Activated CD4-positive, alpha-beta T cell treated with anti-CD3 and anti-CD28 coated beads, Interleukin-2, amount 10 ng/mL, durations not matched to agents 24 days and 14 days (primary cell): ENCODE measurements at regions of chr20 and their contacts with region 1.

Region 1: DNA sequence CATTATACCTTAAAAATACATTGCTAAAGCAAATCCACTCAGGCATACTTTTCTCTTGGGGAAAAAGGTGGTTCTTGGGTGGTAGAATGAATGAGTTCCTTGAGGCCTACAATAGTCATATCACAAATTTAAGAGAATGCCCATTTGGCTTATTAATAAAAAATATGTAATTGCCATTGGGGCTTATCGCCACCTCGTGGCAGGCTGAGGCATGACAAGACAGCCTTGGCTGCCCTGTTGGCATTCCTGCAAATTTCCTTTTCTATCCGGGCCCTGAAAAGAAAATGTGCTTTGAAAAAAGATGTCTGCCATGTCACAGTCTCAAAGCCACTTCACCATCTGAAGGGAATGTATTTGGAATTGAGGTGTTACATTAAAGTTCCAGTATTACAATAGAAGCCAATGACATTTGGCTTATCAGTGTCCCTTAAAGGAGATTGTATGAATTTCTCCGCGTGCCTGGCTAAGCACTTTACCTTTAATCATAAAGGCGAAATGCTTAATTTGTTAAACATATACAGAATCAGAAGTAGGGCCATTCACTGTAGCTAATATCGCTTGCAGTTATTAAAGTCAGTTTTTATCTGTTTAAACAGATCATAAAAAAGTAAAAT is 188.3 kb upstream of the ZFP64 start:
- DNase-seq: peak; percentile 73
- H3K4me3 Mint-ChIP-seq: no peak overlapping the region
- H3K27ac Mint-ChIP-seq: no peak overlapping the region
- H3K4me1 Mint-ChIP-seq: no peaks in the 10 kb centered on the region
- H3K27me3 Mint-ChIP-seq: no peaks in the 10 kb centered on the region

Region 2: DNA sequence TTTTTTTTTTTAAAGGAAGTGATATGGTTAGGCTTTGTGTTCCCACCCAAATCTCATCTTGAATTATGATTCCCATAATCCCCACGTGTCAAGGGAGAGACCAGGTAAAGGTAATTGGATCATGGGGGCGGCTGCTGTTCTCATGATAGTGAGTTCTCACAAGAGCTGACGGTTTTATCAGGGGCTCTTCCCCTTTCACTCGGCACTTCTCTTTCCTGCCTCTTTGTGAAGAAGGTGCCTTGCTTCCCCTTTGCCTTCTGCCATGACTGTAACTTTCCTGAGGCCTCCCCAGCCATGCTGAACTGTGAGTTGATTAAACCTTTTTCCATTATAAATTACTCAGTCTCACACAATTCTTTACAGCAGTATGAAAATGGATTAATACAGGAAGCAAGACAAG is 252.5 kb before region 1 on chr20:
- intact Hi-C with region 1: loop called (anchors 2 kb)
- DNase-seq: no peak
- H3K4me3 Mint-ChIP-seq: no peak overlapping the region
- H3K27ac Mint-ChIP-seq: no peak overlapping the region
- H3K4me1 Mint-ChIP-seq: peaks cover 2% of the 10 kb centered on the region
- H3K27me3 Mint-ChIP-seq: peaks cover 2% of the 10 kb centered on the region

Region 3: GRCh38 chr20:52242237-52243230 is 137.3 kb before region 1 on chr20:
- intact Hi-C with region 1: loop called (anchors 1 kb)
- DNase-seq: no peak
- H3K4me3 Mint-ChIP-seq: no peak overlapping the region
- H3K27ac Mint-ChIP-seq: no peak overlapping the region
- H3K4me1 Mint-ChIP-seq: no peaks in the 10 kb centered on the region
- H3K27me3 Mint-ChIP-seq: peaks cover 2% of the 10 kb centered on the region

Region 4: GRCh38 chr20:52312132-52312729 is 67.6 kb before region 1 on chr20:
- intact Hi-C with region 1: loop called (anchors 1 kb)
- DNase-seq: peak; percentile 86
- H3K4me3 Mint-ChIP-seq: no peak overlapping the region
- H3K27ac Mint-ChIP-seq: no peak overlapping the region
- H3K4me1 Mint-ChIP-seq: peaks cover 6% of the 10 kb centered on the region
- H3K27me3 Mint-ChIP-seq: peaks cover 2% of the 10 kb centered on the region